Endothelial cell of umbilical vein (primary cell): ENCODE measurements at regions of chr1 and their contacts with region 1.

Region 1: DNA sequence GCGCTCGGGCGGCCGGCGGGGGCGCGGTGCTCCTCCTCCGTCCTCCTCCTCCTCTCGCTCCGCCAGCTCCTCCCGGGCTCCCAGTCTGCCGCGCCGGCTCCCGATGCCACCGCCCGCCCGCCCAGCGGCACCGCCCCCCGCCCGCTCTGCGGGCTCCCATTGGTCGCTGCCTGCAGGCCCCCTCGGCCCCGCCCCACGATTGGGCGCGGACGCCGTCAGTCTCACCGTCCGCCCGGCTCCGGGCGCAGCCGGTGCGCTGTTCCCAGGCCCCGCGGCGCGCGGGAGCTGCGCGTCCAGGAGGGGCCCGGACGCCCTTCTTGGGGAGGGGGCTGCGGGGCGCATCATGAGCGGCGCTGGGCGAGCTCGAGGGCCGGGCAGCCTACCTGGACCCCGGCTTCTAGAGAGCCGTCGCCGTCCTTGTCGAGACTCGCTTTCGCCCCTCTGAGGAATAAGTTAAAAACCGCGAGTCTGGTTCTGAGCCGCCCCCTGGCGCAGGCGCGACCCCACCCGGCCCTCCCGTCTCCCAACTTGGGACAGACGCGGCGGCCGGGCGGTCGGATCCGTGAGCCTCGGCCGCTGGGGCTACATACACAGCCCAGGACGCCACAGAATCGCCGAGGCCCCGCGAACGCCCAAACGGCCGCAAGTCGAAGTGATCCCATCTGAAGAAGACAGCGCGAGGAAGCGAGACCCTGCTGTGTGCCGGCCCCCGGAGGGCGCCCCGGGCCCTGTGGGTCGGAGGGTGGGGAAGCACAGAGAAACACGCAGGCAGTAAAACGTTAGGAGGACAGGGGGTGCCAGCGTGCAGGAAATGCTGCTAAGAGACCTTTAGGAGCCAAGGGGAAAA is at the start of gene SIPA1L2:
- DNase-seq: peak; percentile 93
- H3K4me3 ChIP-seq: peak within 1 kb of the TSS; percentile 83 to 88 (median 84)
- H3K27ac ChIP-seq: peak within 1 kb of the TSS; percentile 21
- H3K4me1 ChIP-seq: peaks cover 16% of the 10 kb centered on the region
- H3K27me3 ChIP-seq: no peaks in the 10 kb centered on the region
- CTCF ChIP-seq: peak; percentile 16 to 38
- POLR2A ChIP-seq: no peak
- total RNA-seq, gene SIPA1L2: 12.8 and 14.2 TPM in 2 replicates

Region 2: GRCh38 chr1:231683439-231684165 is 946.7 kb before region 1 on chr1:
- CTCF ChIA-PET with region 1: no interaction called
- POLR2A ChIA-PET with region 1: no interaction called
- dilution Hi-C with region 1: no loop called
- intact Hi-C with region 1: no loop called
- DNase-seq: no peak
- H3K4me3 ChIP-seq: no peak overlapping the region
- H3K27ac ChIP-seq: no peak overlapping the region
- H3K4me1 ChIP-seq: no peaks in the 10 kb centered on the region
- H3K27me3 ChIP-seq: no peaks in the 10 kb centered on the region
- CTCF ChIP-seq: no peak
- POLR2A ChIP-seq: no peak

Region 3: GRCh38 chr1:231757101-231757404 is 873.2 kb before region 1 on chr1:
- CTCF ChIA-PET with region 1: interaction called, 22 read pairs
- POLR2A ChIA-PET with region 1: no interaction called
- dilution Hi-C with region 1: no loop called
- intact Hi-C with region 1: loop called (anchors 1 kb)
- DNase-seq: no peak
- H3K4me3 ChIP-seq: no peak overlapping the region
- H3K27ac ChIP-seq: no peak overlapping the region
- H3K4me1 ChIP-seq: no peaks in the 10 kb centered on the region
- H3K27me3 ChIP-seq: no peaks in the 10 kb centered on the region
- CTCF ChIP-seq: no peak
- POLR2A ChIP-seq: no peak

Region 4: GRCh38 chr1:232012773-232013386 is 617.4 kb before region 1 on chr1:
- CTCF ChIA-PET with region 1: interaction called, 3 read pairs
- POLR2A ChIA-PET with region 1: no interaction called
- dilution Hi-C with region 1: no loop called
- intact Hi-C with region 1: loop called (anchors 2 kb)
- DNase-seq: peak; percentile 97
- H3K4me3 ChIP-seq: peak overlapping the region in 1 of 3 experiments; percentile 14
- H3K27ac ChIP-seq: peak overlapping the region; percentile 80
- H3K4me1 ChIP-seq: peaks cover 27% of the 10 kb centered on the region
- H3K27me3 ChIP-seq: no peaks in the 10 kb centered on the region
- CTCF ChIP-seq: no peak
- POLR2A ChIP-seq: no peak

Region 5: DNA sequence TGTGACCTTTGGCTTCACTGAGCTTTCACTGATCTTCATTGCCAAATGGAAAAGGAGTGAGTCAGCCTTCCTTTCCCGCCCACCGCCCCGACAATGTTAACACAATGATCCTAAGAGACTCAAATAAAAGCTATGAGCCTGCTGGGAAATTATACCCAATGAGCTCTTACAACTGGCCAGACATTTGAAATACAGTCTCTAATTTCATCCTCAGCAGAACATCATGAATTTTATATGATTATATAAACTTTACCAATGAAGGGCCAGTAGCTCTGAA is 252.8 kb before region 1 on chr1:
- CTCF ChIA-PET with region 1: no interaction called
- POLR2A ChIA-PET with region 1: no interaction called
- dilution Hi-C with region 1: no loop called
- intact Hi-C with region 1: loop called (anchors 5 kb)
- DNase-seq: peak; percentile 83
- H3K4me3 ChIP-seq: no peak overlapping the region
- H3K27ac ChIP-seq: no peak overlapping the region
- H3K4me1 ChIP-seq: peaks cover 5% of the 10 kb centered on the region
- H3K27me3 ChIP-seq: no peaks in the 10 kb centered on the region
- CTCF ChIP-seq: no peak
- POLR2A ChIP-seq: no peak

Region 6: GRCh38 chr1:232553050-232553754 is 77.1 kb before region 1 on chr1:
- CTCF ChIA-PET with region 1: interaction called, 5 read pairs
- POLR2A ChIA-PET with region 1: no interaction called
- dilution Hi-C with region 1: no loop called
- intact Hi-C with region 1: loop called (anchors 2 kb)
- DNase-seq: peak; percentile 89
- H3K4me3 ChIP-seq: no peak overlapping the region
- H3K27ac ChIP-seq: no peak overlapping the region
- H3K4me1 ChIP-seq: peaks cover 12% of the 10 kb centered on the region
- H3K27me3 ChIP-seq: no peaks in the 10 kb centered on the region
- CTCF ChIP-seq: no peak
- POLR2A ChIP-seq: no peak

Region 7: DNA sequence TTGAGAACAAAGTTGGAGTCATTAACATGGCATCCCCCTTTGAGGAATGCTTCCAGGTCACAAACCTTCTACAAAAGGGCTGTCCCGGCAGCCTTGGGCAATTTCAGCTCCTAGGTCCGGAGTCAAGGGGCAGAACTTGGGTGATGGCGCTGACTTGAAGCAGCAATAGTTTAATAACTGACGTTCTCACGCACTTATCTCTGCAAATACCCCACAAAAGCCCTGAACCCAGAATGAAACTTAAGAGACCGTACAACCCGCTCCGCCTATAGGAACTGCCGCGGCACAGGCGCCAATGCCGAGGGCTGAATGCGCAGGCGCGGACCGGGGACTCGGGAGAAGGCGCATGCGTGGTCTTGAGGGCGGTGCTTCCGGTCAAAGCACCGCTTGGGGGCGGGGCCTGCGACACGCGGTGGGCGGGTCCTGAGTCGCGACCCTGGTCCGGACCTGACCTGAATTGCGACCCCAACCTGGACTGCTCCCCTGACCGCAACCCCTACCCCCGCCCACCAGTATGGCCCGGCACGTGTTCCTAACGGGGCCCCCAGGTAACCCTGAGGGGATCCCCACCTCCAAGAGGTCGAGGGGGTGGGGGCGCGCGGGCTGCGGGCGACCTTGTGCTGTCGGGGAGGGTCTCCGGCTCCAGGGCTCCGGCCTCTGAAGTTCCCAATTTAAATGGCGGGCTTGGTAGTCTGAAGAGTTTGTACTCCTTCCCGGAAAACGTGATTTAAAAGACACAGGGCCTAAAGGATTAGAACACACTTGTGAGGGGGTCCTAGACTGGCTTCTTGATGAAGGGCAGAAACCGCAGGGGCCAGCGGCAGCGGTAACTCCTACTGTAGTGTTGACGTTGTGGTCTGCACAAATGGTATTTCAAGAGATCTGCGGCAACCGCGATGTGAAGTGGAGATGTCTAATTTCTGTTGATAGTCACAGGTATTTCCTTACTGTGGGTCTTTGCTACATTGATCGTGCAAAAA is 320.2 kb after region 1 on chr1 and contains the start of gene NTPCR:
- CTCF ChIA-PET with region 1: interaction called, 3 read pairs
- POLR2A ChIA-PET with region 1: no interaction called
- dilution Hi-C with region 1: no loop called
- intact Hi-C with region 1: loop called (anchors 1 kb)
- DNase-seq: peak; percentile 96
- H3K4me3 ChIP-seq: peak within 1 kb of the TSS; percentile 48 to 85 (median 64)
- H3K27ac ChIP-seq: peak within 1 kb of the TSS; percentile 69
- H3K4me1 ChIP-seq: peaks cover 10% of the 10 kb centered on the region
- H3K27me3 ChIP-seq: no peaks in the 10 kb centered on the region
- CTCF ChIP-seq: peak in 1 of 2 donors; percentile 14
- POLR2A ChIP-seq: peak; percentile 85
- total RNA-seq, gene NTPCR: 30.3 and 35.3 TPM in 2 replicates